Activated naive CD4-positive, alpha-beta T cell treated with anti-CD3 and anti-CD28 coated beads, Interleukin-2, amount 10 ng/mL, durations not matched to agents 7 days and 5 days (primary cell): ENCODE measurements at regions of chrX and their contacts with region 1.

Region 1: DNA sequence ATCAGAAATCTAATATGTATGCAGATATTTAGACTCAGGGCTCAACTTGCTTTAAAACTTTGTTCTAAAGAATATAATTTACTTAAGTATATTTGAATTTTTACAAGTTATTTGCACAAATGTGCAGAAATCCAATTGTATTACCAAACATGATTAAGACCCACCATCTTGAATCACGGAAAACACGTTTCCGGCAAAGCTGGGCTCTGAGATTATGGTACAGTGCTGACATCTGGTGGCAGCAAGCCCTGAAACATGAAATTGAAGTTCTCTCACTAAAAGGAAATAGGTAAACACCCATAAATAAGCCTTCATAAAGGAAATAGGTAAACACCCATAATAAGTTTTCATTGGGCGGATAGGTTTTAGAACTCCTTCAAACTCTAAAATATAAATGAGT is 98.3 kb upstream of the MAOA start:
- DNase-seq: peak; percentile 70
- H3K4me3 Mint-ChIP-seq: no peak overlapping the region
- H3K27ac Mint-ChIP-seq: no peak overlapping the region
- H3K4me1 Mint-ChIP-seq: peaks cover 4% of the 10 kb centered on the region
- H3K27me3 Mint-ChIP-seq: no peaks in the 10 kb centered on the region

Region 2: DNA sequence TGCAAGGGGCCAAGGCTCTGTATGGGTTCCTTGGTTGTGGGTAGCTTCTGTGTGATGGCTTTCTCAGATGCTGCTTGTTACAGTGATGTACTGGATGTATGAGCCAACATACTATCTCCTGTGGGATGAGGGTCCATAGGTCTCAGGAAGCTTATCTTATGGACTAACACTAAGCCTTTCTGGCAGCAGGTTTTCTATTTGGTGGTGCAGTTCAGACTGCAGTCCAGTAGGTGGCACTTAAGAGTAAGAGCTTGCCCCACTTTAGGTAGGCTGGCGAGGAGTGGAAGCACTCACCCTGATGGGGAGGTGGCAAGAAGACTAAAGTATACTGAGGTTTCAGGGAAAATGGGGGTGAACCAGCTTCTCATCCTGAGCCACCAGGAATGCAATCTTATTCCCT is 208.4 kb before region 1 on chrX:
- CTCF ChIA-PET with region 1: interaction called, 16 read pairs
- DNase-seq: peak; percentile 43
- H3K4me3 Mint-ChIP-seq: no peak overlapping the region
- H3K27ac Mint-ChIP-seq: no peak overlapping the region
- H3K4me1 Mint-ChIP-seq: no peaks in the 10 kb centered on the region
- H3K27me3 Mint-ChIP-seq: no peaks in the 10 kb centered on the region

Region 3: GRCh38 chrX:43540318-43540717 is 17.5 kb before region 1 on chrX:
- CTCF ChIA-PET with region 1: no interaction called
- DNase-seq: no peak
- H3K4me3 Mint-ChIP-seq: no peak overlapping the region
- H3K27ac Mint-ChIP-seq: no peak overlapping the region
- H3K4me1 Mint-ChIP-seq: no peaks in the 10 kb centered on the region
- H3K27me3 Mint-ChIP-seq: no peaks in the 10 kb centered on the region

Region 4: GRCh38 chrX:43676971-43677572 is 119.3 kb after region 1 on chrX:
- CTCF ChIA-PET with region 1: no interaction called
- DNase-seq: no peak
- H3K4me3 Mint-ChIP-seq: no peak overlapping the region
- H3K27ac Mint-ChIP-seq: peak overlapping the region; percentile 45
- H3K4me1 Mint-ChIP-seq: no peaks in the 10 kb centered on the region
- H3K27me3 Mint-ChIP-seq: no peaks in the 10 kb centered on the region

Region 5: DNA sequence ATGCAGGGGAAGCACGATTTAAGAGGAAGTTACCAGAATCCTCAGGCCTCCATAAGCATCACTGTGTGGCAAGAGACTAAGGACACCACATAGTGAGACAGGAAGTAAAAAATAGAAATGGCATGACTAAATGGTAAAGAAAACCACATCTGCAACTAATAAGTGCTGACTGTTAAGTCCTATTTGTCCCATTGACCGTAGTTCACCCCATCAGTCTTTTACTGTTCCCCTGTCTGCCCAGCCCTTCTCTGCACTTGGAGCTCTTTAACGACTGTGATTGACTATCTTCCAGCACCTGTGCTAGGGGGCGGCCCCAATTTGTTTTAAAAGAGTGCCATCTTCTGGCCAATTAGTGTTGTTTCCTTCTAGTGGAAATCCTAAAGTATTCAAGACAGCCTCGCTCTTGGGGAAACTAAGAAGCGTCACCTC is 192.5 kb after region 1 on chrX:
- CTCF ChIA-PET with region 1: interaction called, 18 read pairs
- DNase-seq: peak; percentile 44
- H3K4me3 Mint-ChIP-seq: no peak overlapping the region
- H3K27ac Mint-ChIP-seq: no peak overlapping the region
- H3K4me1 Mint-ChIP-seq: peaks cover 2% of the 10 kb centered on the region
- H3K27me3 Mint-ChIP-seq: no peaks in the 10 kb centered on the region

Region 6: DNA sequence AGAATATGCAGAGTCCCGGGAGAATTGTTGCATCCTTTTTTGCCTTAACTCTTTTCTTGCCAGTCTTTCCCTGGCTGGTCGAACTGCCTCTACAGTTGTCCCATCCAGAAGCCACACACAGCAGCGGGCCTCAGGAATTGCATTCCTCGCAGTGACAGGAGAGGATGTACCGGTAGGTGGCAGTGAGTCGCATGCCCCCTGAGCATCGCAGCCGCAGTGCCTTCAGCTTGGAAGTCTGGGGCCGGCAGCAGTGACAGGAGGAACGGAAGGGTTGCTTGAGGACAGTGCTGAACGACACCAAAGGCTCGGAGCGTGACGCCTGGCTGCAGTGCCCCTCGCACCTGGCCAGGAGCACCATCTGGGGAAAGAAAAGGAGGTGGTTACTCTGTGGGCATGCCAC is 391.9 kb after region 1 on chrX:
- CTCF ChIA-PET with region 1: no interaction called
- DNase-seq: peak; percentile 49
- H3K4me3 Mint-ChIP-seq: no peak overlapping the region
- H3K27ac Mint-ChIP-seq: no peak overlapping the region
- H3K4me1 Mint-ChIP-seq: peaks cover 2% of the 10 kb centered on the region
- H3K27me3 Mint-ChIP-seq: peaks cover 8% of the 10 kb centered on the region